HEK293 (cell line): ENCODE measurements at regions of chr9 and their contacts with region 1.

Region 1: GRCh38 chr9:94166237-94166963 is 82.1 kb downstream of the PTPDC1 start:
- H3K4me3 ChIP-seq: peak overlapping the region; percentile 94
- H3K27ac ChIP-seq: peak overlapping the region; percentile 98
- H3K4me1 ChIP-seq: peaks cover 2% of the 10 kb centered on the region; the same call in 1 of the 2 replicates
- CTCF ChIP-seq: no peak

Region 2: GRCh38 chr9:94139672-94140417 is 26.6 kb before region 1 on chr9:
- CTCF ChIA-PET with region 1: no interaction called
- POLR2A ChIA-PET with region 1: interaction called, 10 read pairs
- H3K4me3 ChIP-seq: no peak overlapping the region
- H3K27ac ChIP-seq: no peak overlapping the region
- H3K4me1 ChIP-seq: no peaks in the 10 kb centered on the region; the same call in 1 of the 2 replicates
- CTCF ChIP-seq: no peak